SK-N-SH (cell line): ENCODE measurements at regions of chr1 and their contacts with region 1.

Region 1: GRCh38 chr1:179809506-179810366 is 66.6 kb downstream of the FAM163A start:
- DNase-seq: peak; percentile 81
- H3K4me3 ChIP-seq: no peak overlapping the region; a peak in 1 of 4 replicates
- H3K27ac ChIP-seq: peak overlapping the region in 1 of 2 experiments; percentile 79; a peak in 2 of 4 replicates
- H3K4me1 ChIP-seq: peaks cover 0 to 58% of the 10 kb centered on the region in 2 experiments; a peak in 1 of 4 replicates
- H3K27me3 ChIP-seq: peaks cover 10% of the 10 kb centered on the region; the same call in 1 of the 2 replicates
- CTCF ChIP-seq: peak; percentile 92
- EP300 ChIP-seq: no peak
- RAD21 ChIP-seq: peak; percentile 84

Region 2: DNA sequence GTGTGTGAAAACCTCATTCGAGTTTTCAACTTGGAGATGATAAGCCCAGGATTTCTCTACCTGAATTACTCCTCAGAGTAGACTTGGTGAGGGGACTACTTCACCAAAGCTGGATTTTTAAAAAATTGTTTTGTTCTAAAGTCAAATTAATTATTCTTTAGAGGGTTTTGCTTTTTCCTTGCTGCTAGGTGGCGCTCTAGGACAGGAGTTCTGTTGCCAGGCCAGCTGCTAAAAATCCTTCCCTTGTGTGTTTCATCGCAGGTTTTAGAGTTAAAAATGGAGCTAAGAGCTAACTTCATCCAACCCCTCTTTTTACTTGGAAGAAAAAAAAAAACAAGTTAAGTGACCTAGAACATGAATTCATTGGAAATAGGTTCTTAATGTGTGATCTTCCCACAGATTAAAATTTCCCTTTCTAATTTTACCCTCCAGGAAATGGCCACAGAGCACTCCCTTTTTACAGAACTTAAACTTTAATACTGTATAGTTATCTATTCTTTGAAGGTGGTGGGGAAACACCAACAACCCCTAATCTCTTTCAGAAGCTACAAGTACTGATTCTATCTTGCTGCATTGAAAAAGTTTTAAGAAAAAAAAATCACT is 103.3 kb before region 1 on chr1:
- CTCF ChIA-PET with region 1: interaction called, 862 read pairs
- POLR2A ChIA-PET with region 1: interaction called, 14 read pairs
- DNase-seq: peak; percentile 56
- H3K4me3 ChIP-seq: no peak overlapping the region; a peak in 1 of 4 replicates
- H3K27ac ChIP-seq: peak overlapping the region in 1 of 2 experiments; percentile 39; a peak in 1 of 4 replicates
- H3K4me1 ChIP-seq: peaks cover 0 to 23% of the 10 kb centered on the region in 2 experiments; a peak in 2 of 4 replicates
- H3K27me3 ChIP-seq: no peaks in the 10 kb centered on the region
- CTCF ChIP-seq: peak; percentile 96
- EP300 ChIP-seq: no peak
- RAD21 ChIP-seq: peak; percentile 99

Region 3: GRCh38 chr1:179742717-179743678 is 66.7 kb before region 1 on chr1 and contains the start of gene FAM163A:
- CTCF ChIA-PET with region 1: interaction called, 16 read pairs
- POLR2A ChIA-PET with region 1: interaction called, 20 read pairs
- DNase-seq: peak; percentile 85
- H3K4me3 ChIP-seq: peak within 1 kb of the TSS in 1 of 2 experiments; percentile 54; a peak in 2 of 4 replicates
- H3K27ac ChIP-seq: peak within 1 kb of the TSS in 1 of 2 experiments; percentile 99; a peak in 2 of 4 replicates
- H3K4me1 ChIP-seq: peaks cover 0 to 38% of the 10 kb centered on the region in 2 experiments; a peak in 2 of 4 replicates
- H3K27me3 ChIP-seq: peaks cover 41% of the 10 kb centered on the region
- CTCF ChIP-seq: no peak
- EP300 ChIP-seq: no peak
- RAD21 ChIP-seq: peak; percentile 24; the same call in 1 of the 2 replicates
- polyA plus RNA-seq, gene FAM163A: 0.43 and 1.1 TPM in 2 replicates

Region 4: DNA sequence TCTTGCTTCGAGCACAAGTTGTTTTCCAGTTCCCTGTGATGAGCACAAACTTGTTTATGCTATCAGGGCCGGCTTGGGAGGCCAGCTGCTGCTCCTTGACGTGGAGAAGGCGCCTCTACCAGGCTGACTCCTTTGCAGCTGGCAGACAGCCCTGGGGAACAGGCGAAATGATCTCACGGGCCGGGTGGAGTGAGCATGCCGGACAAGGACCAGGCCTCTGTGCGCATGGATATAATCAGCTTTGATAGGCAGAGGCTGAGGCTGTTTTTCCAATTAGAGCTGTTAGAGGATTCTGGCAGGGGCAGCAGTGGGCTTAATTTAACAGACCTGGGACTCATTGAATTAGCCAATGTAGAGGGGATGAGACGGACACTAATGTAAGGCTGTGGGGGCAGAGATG is 27.8 kb before region 1 on chr1:
- CTCF ChIA-PET with region 1: interaction called, 87 read pairs
- POLR2A ChIA-PET with region 1: interaction called, 34 read pairs
- DNase-seq: peak; percentile 83
- H3K4me3 ChIP-seq: no peak overlapping the region
- H3K27ac ChIP-seq: peak overlapping the region in 1 of 2 experiments; percentile 94; a peak in 2 of 4 replicates
- H3K4me1 ChIP-seq: peaks cover 0 to 82% of the 10 kb centered on the region in 2 experiments; a peak in 2 of 4 replicates
- H3K27me3 ChIP-seq: peaks cover 16% of the 10 kb centered on the region; the same call in 1 of the 2 replicates
- CTCF ChIP-seq: no peak
- EP300 ChIP-seq: peak in 1 of 2 experiments; percentile 100; a peak in 2 of 4 replicates
- RAD21 ChIP-seq: peak; percentile 53

Region 5: DNA sequence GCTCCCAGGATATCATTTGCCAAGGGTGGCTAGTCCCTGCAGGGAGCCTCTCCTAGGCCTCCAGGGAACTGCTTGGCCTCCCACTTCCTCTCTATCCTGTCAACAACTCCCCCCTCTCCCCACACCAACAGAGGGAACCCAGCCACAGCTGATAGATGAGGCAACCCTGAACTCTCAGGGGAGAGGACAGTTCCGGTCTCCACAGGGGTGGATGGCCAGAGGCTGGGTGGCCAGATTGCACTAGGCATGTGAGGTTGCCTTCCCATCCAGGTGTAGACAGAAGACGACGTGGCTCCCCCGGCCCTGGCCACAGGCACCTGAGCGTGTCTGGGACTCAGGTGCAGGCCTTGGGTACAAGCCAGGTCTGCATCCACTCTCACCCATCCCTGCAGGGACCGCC is 14.5 kb after region 1 on chr1:
- CTCF ChIA-PET with region 1: interaction called, 72 read pairs
- POLR2A ChIA-PET with region 1: no interaction called
- DNase-seq: no peak
- H3K4me3 ChIP-seq: no peak overlapping the region
- H3K27ac ChIP-seq: no peak overlapping the region
- H3K4me1 ChIP-seq: no peaks in the 10 kb centered on the region; a peak in 1 of 4 replicates
- H3K27me3 ChIP-seq: no peaks in the 10 kb centered on the region; the same call in 1 of the 2 replicates
- CTCF ChIP-seq: no peak
- EP300 ChIP-seq: no peak
- RAD21 ChIP-seq: no peak

Region 6: DNA sequence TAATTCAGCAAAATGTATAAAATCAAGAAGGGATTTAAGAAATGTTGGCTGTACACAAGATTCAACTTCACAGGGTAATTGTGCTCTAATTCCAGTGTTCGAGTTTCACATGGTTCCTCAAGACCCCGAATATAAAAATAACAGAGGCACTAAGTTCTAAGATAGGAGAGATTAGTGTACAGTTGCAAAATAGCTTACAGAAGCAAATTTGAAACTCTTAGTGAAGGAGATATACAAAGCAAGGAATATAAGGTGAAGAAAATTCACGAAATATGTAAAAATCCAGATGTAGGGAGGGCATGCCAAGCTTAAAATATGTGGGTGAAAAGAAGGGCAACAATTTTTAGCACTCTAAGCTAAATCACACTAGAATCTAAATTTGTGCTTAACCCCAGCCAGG is 38.5 kb after region 1 on chr1:
- CTCF ChIA-PET with region 1: interaction called, 19 read pairs
- POLR2A ChIA-PET with region 1: no interaction called
- DNase-seq: no peak
- H3K4me3 ChIP-seq: no peak overlapping the region
- H3K27ac ChIP-seq: no peak overlapping the region
- H3K4me1 ChIP-seq: no peaks in the 10 kb centered on the region
- H3K27me3 ChIP-seq: no peaks in the 10 kb centered on the region
- CTCF ChIP-seq: no peak
- EP300 ChIP-seq: no peak
- RAD21 ChIP-seq: no peak

Region 7: GRCh38 chr1:180178511-180179161 is 368.9 kb after region 1 on chr1:
- CTCF ChIA-PET with region 1: interaction called, 38 read pairs
- POLR2A ChIA-PET with region 1: no interaction called
- DNase-seq: peak; percentile 85
- H3K4me3 ChIP-seq: peak overlapping the region in 1 of 2 experiments; percentile 27; a peak in 1 of 4 replicates
- H3K27ac ChIP-seq: no peak overlapping the region
- H3K4me1 ChIP-seq: peaks cover 0 to 12% of the 10 kb centered on the region in 2 experiments; a peak in 1 of 4 replicates
- H3K27me3 ChIP-seq: no peaks in the 10 kb centered on the region
- CTCF ChIP-seq: peak; percentile 97
- EP300 ChIP-seq: no peak
- RAD21 ChIP-seq: peak; percentile 96